Motor neuron (in vitro differentiated cells): ENCODE measurements at regions of chr3 and their contacts with region 1.

Region 1: GRCh38 chr3:172836390-172836997 is 86.0 kb downstream of the ECT2 start:
- ATAC-seq: peak in 4 of 8 experiments; percentile 48 to 79 (median 64)
- H3K4me3 ChIP-seq: no peak overlapping the region
- H3K27ac ChIP-seq: no peak overlapping the region
- H3K4me1 ChIP-seq: no peaks in the 10 kb centered on the region

Region 2: DNA sequence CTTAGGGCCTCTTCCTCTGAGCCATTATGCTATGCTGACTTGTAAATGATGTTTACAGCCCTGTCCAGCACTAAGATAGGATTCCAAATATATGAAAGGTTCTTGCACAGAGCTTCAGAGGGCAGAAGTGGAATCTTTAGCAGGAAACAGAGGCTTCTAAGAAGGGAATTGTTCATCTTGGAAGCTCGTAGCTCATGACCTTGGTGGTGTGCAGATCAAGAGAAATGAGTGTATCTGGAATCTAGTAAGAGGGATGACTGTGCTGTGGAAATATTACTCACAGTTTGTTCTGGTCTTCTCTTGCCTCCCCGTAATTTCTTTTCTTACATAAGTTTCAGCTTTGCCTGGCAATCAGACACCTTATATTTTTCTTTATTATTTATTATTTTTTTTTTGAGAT is 128.8 kb after region 1 on chr3:
- in situ Hi-C with region 1: no loop called
- ATAC-seq: no peak
- H3K4me3 ChIP-seq: no peak overlapping the region
- H3K27ac ChIP-seq: no peak overlapping the region
- H3K4me1 ChIP-seq: no peaks in the 10 kb centered on the region

Region 3: DNA sequence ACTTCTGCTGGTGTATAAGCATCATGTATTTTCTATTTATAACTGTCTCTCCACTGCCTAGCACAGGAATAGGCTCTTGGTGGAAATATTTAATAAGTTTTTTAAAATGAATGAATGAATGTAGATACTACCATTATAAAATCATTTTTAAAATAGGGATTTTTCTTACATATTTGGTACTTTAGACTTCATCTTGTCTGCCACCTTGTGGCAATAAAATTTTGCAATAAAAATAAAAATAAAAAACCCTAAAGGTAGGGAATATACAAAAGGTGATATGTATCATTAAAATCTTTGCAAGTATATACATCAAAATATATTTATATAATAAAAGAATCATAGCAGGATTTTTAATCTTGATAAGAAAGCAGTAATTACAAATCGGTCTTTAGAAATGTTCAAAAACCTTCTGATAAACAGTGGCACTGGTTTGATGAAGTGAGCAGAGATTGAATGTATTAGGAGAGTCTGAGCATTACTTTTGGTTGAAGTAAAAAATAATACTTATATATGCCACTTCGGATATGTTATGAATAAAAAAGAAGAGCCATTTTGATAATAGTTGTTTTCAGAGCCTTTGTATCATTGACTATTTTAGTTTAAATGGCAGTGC is 209.4 kb after region 1 on chr3:
- in situ Hi-C with region 1: loop called in 3 of 9 experiments (anchors 25 kb)
- ATAC-seq: no peak
- H3K4me3 ChIP-seq: no peak overlapping the region
- H3K27ac ChIP-seq: no peak overlapping the region
- H3K4me1 ChIP-seq: no peaks in the 10 kb centered on the region